Activated CD4-positive, alpha-beta T cell treated with anti-CD3 and anti-CD28 coated beads, Interleukin-2, amount 10 ng/mL, durations not matched to agents 24 days and 14 days (primary cell): ENCODE measurements at regions of chr15 and their contacts with region 1.

Region 1: GRCh38 chr15:49046220-49047102 is at the start of gene SECISBP2L:
- DNase-seq: peak; percentile 97
- H3K4me3 Mint-ChIP-seq: peak within 1 kb of the TSS; percentile 98
- H3K27ac Mint-ChIP-seq: peak within 1 kb of the TSS; percentile 90
- H3K4me1 Mint-ChIP-seq: peaks cover 22% of the 10 kb centered on the region
- H3K27me3 Mint-ChIP-seq: no peaks in the 10 kb centered on the region
- total RNA-seq, gene SECISBP2L: 38.1 and 40.0 TPM in 2 replicates

Region 2: GRCh38 chr15:48810414-48811317 is 235.8 kb before region 1 on chr15 and contains the start of gene CEP152:
- intact Hi-C with region 1: loop called (anchors 1 kb)
- DNase-seq: peak; percentile 99
- H3K4me3 Mint-ChIP-seq: peak within 1 kb of the TSS; percentile 96
- H3K27ac Mint-ChIP-seq: peak within 1 kb of the TSS; percentile 96
- H3K4me1 Mint-ChIP-seq: peaks cover 35% of the 10 kb centered on the region
- H3K27me3 Mint-ChIP-seq: peaks cover 17% of the 10 kb centered on the region
- total RNA-seq, gene CEP152: 32.0 and 32.2 TPM in 2 replicates

Region 3: DNA sequence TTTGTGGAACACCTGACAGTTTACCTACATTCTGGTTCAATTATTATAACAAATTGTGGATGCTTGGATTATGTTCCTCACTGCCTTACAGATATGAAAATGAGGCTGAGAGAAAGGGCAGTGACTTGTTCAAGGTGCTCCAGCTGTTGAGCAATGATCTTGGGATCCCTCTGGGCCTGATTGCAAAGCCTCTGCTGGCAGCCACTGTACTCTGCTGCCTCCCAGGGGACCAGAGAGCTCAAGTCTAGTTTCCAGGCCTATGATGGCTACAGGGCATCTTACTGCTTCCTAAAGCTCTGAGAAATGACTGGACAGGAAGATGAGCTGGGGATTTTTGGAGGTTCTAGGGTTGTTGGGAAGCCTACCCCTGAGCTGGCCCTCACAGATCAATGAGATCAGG is 80.5 kb before region 1 on chr15:
- intact Hi-C with region 1: loop called (anchors 2 kb)
- DNase-seq: peak; percentile 72
- H3K4me3 Mint-ChIP-seq: peak overlapping the region; percentile 58
- H3K27ac Mint-ChIP-seq: peak overlapping the region; percentile 93
- H3K4me1 Mint-ChIP-seq: peaks cover 53% of the 10 kb centered on the region
- H3K27me3 Mint-ChIP-seq: peaks cover 2% of the 10 kb centered on the region

Region 4: DNA sequence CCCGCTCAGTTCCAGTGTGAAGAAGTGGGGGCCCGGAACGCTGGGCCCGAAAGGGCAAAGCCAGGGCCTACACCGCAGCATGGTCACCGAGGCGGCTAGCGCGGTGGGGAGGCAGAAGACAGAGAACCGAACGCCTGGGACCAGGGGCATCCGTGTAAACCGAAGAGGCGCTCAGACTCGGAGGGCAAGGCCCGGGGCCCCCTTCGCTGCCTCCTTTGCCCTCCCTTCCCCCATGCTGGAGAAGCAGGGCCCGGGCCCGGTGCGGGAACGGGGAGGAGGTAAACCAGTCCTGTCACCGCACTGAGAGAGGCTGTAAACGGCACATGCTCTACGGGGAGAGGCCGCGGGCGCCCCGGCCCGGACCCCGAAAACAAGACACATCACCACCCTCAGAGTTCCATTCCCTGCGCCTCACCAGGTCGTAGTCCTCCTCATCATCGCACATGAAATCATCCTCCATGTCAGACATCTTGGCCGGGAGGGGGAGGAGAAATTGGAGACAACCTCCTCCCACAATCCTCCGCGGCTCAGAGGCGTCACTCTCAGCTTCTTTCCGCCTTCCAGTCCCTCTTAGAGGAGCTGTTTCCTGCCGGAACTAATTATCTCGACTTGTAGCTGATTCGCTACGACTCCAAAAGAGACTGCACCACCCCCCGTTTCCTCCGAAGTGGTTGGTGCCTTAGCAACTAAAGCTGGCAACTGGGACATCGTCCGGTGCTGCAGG is 108.8 kb after region 1 on chr15 and contains the start of gene COPS2:
- intact Hi-C with region 1: loop called (anchors 1 kb)
- DNase-seq: peak; percentile 98
- H3K4me3 Mint-ChIP-seq: peak within 1 kb of the TSS; percentile 99
- H3K27ac Mint-ChIP-seq: peak within 1 kb of the TSS; percentile 99
- H3K4me1 Mint-ChIP-seq: peaks cover 40% of the 10 kb centered on the region
- H3K27me3 Mint-ChIP-seq: peaks cover 1% of the 10 kb centered on the region
- total RNA-seq, gene COPS2: 98.6 and 99.0 TPM in 2 replicates

Region 5: GRCh38 chr15:49370782-49371181 is 324.3 kb after region 1 on chr15:
- intact Hi-C with region 1: no loop called
- DNase-seq: no peak
- H3K4me3 Mint-ChIP-seq: no peak overlapping the region
- H3K27ac Mint-ChIP-seq: no peak overlapping the region
- H3K4me1 Mint-ChIP-seq: no peaks in the 10 kb centered on the region
- H3K27me3 Mint-ChIP-seq: peaks cover under 1% of the 10 kb centered on the region